Activated T-helper 2 cell treated with anti-CD3 and anti-CD28 coated beads, Interferon-gamma antibody, Interleukin-2, Interleukin-4, amounts not matched to agents 10 μg/mL and 5 μg/mL and 100 μg/mL, durations not matched to agents 14 hours and 24 hours and 36 hours (primary cell): ENCODE measurements at regions of chr21 and their contacts with region 1.

Region 1: GRCh38 chr21:33229784-33230544 is at the start of gene IFNAR2:
- DNase-seq: peak; percentile 71
- H3K4me3 Mint-ChIP-seq: peak within 1 kb of the TSS; percentile 86
- H3K27ac Mint-ChIP-seq: peak within 1 kb of the TSS; percentile 74
- H3K4me1 Mint-ChIP-seq: peaks cover 44% of the 10 kb centered on the region
- H3K27me3 Mint-ChIP-seq: no peaks in the 10 kb centered on the region
- total RNA-seq, gene IFNAR2: 34.8 and 36.8 TPM in 2 replicates

Region 2: GRCh38 chr21:33205476-33205875 is 24.5 kb before region 1 on chr21:
- intact Hi-C with region 1: loop called (anchors 2 kb)
- DNase-seq: no peak
- H3K4me3 Mint-ChIP-seq: peak overlapping the region; percentile 51
- H3K27ac Mint-ChIP-seq: peak overlapping the region; percentile 81
- H3K4me1 Mint-ChIP-seq: peaks cover 35% of the 10 kb centered on the region
- H3K27me3 Mint-ChIP-seq: no peaks in the 10 kb centered on the region

Region 3: GRCh38 chr21:33244082-33244778 is 14.3 kb after region 1 on chr21:
- intact Hi-C with region 1: loop called (anchors 1 kb)
- DNase-seq: no peak
- H3K4me3 Mint-ChIP-seq: peak overlapping the region; percentile 54
- H3K27ac Mint-ChIP-seq: peak overlapping the region; percentile 90
- H3K4me1 Mint-ChIP-seq: peaks cover 77% of the 10 kb centered on the region
- H3K27me3 Mint-ChIP-seq: no peaks in the 10 kb centered on the region

Region 4: DNA sequence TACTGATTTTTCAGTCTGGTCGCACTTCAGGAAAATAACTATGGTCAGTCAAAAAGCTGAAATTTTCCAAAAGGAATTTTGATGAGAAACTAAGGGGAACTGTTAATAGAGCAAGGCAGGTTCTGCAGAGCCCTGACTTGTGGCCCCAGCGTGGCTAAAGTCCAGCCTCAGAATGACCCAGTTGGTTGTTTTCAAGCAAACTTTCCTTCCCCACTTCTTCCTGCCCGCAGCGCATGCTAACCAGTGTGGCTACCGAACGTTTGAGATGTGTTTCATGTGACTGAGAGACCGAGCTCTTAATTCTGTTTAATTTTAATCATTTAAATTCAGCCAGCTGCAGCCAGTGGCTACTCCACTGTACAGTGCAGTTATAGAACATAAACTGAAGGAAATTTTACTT is 30.0 kb after region 1 on chr21:
- intact Hi-C with region 1: loop called (anchors 1 kb)
- DNase-seq: no peak
- H3K4me3 Mint-ChIP-seq: no peak overlapping the region
- H3K27ac Mint-ChIP-seq: no peak overlapping the region
- H3K4me1 Mint-ChIP-seq: peaks cover 42% of the 10 kb centered on the region
- H3K27me3 Mint-ChIP-seq: no peaks in the 10 kb centered on the region

Region 5: GRCh38 chr21:33308586-33309490 is 78.9 kb after region 1 on chr21:
- intact Hi-C with region 1: no loop called
- DNase-seq: no peak
- H3K4me3 Mint-ChIP-seq: no peak overlapping the region
- H3K27ac Mint-ChIP-seq: no peak overlapping the region
- H3K4me1 Mint-ChIP-seq: peaks cover 21% of the 10 kb centered on the region
- H3K27me3 Mint-ChIP-seq: peaks cover under 1% of the 10 kb centered on the region